ENCODE measurements at regions of chr2 and their contacts with region 1.

Region 1: GRCh38 chr2:197800091-197800490 is 4.3 kb upstream of the PLCL1 start:
- DNase-seq: no peak
- H3K4me3 ChIP-seq: no peak overlapping the region
- H3K27ac ChIP-seq: no peak overlapping the region
- H3K4me1 ChIP-seq: peaks cover 8 to 13% (median 8%) of the 10 kb centered on the region in 4 experiments
- H3K27me3 ChIP-seq: peaks cover 3 to 11% (median 5%) of the 10 kb centered on the region in 5 experiments

Region 2: GRCh38 chr2:197813093-197813787 is 13.1 kb after region 1 on chr2:
- CTCF ChIA-PET with region 1: interaction called, 11 read pairs
- POLR2A ChIA-PET with region 1: no interaction called
- DNase-seq: peak; percentile 18 to 48 (median 35)
- H3K4me3 ChIP-seq: no peak overlapping the region
- H3K27ac ChIP-seq: no peak overlapping the region
- H3K4me1 ChIP-seq: peaks cover 0 to 2% (median 0%) of the 10 kb centered on the region in 4 experiments
- H3K27me3 ChIP-seq: peaks cover 0 to 1% (median 0%) of the 10 kb centered on the region in 5 experiments

Region 3: DNA sequence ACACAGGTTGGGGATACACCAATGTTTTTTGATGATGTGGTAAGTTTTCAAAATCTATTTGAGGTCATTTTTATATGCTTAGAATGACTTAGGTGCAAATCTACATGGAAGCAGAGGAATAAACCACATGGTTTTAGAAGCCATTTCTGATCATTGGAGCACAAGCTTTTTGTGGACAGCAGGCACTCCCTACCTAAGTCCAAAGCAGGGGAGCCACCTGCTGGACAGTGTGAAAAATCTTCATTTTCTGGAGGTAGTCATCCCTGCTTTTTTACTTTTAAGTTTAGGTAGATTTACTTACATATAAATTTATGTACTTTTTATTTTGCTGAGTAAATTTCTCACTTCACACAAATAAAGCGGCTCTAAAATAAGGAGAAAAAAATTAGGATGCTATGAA is 327.5 kb after region 1 on chr2:
- CTCF ChIA-PET with region 1: interaction called, 12 read pairs
- POLR2A ChIA-PET with region 1: no interaction called
- DNase-seq: peak; percentile 56 to 78 (median 73)
- H3K4me3 ChIP-seq: no peak overlapping the region
- H3K27ac ChIP-seq: no peak overlapping the region
- H3K4me1 ChIP-seq: no peaks in the 10 kb centered on the region
- H3K27me3 ChIP-seq: peaks cover 0 to 4% (median 0%) of the 10 kb centered on the region in 5 experiments

Region 4: DNA sequence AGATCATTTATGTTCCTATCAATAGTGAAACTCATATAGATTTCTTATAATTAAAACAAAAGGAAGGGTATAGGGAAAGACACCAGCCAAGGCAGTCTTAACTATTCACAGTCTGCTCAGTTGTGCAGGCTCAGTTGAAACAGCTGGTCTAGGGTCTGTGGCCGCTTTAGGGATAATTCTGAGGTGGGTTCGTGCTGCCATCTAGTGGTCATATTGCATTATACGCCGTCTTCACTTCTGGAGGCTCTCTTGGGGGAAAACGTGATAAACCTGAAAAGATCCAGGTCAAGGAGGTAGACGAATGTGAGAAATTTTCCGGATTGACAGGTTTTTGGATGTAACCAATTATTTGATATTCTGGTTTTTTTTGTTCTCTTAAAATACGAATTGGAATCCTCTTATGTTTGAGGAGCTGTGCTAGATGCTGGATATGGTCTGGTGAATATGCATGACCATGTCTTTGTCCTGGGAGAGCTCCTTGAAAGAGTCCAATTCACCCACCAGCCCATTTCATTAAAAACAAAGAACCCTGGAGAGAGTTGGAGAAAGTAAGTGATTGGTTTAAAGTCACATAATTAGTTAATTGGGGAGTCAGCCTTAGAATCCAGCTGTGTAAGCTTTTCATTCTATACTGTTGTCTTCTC is 496.7 kb after region 1 on chr2:
- CTCF ChIA-PET with region 1: interaction called, 13 read pairs
- POLR2A ChIA-PET with region 1: no interaction called
- DNase-seq: peak; percentile 68 to 85 (median 79)
- H3K4me3 ChIP-seq: no peak overlapping the region
- H3K27ac ChIP-seq: no peak overlapping the region
- H3K4me1 ChIP-seq: peaks cover 0 to 5% (median 0%) of the 10 kb centered on the region in 4 experiments
- H3K27me3 ChIP-seq: peaks cover 0 to 3% (median 0%) of the 10 kb centered on the region in 5 experiments